Brain microvascular endothelial cell (primary cell): ENCODE measurements at regions of chr2 and their contacts with region 1.

Region 1: GRCh38 chr2:137838255-137839092 is 125.8 kb upstream of the HNMT start:
- DNase-seq: peak; percentile 19
- H3K4me3 ChIP-seq: no peak overlapping the region
- H3K27ac ChIP-seq: no peak overlapping the region
- H3K27me3 ChIP-seq: no peaks in the 10 kb centered on the region
- CTCF ChIP-seq: peak; percentile 50

Region 2: GRCh38 chr2:136423516-136423996 is 1414.9 kb before region 1 on chr2:
- in situ Hi-C with region 1: loop called (anchors 25 kb)
- DNase-seq: peak; percentile 45
- H3K4me3 ChIP-seq: peak overlapping the region; percentile 58
- H3K27ac ChIP-seq: no peak overlapping the region
- H3K27me3 ChIP-seq: no peaks in the 10 kb centered on the region
- CTCF ChIP-seq: peak; percentile 91